GM23248 (cell line): ENCODE measurements at regions of chr12 and their contacts with region 1.

Region 1: DNA sequence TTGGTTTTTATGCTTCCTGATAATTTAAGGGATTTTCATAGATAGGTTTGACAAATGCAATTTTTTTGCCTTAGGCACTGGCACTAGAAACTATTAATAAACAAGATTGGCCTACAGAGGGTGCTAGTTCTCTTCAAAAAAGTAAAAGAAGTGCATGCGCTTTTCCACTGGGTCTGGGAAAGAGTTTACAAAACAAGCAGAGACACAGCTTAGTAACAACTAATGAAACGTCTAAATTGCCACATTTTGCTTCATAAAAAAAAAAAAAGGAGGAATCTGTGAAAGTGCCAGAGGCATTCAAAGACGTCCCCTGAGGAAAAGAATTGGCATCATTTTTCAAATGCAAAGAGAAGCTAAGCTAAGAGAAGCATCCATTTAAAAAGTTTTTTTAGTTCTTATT is 58.3 kb upstream of the EEA1 start:
- DNase-seq: peak; percentile 89
- H3K4me3 ChIP-seq: no peak overlapping the region
- H3K27ac ChIP-seq: no peak overlapping the region
- H3K4me1 ChIP-seq: peaks cover 7% of the 10 kb centered on the region
- H3K27me3 ChIP-seq: no peaks in the 10 kb centered on the region

Region 2: GRCh38 chr12:93347054-93347776 is 359.9 kb after region 1 on chr12:
- in situ Hi-C with region 1: no loop called
- DNase-seq: no peak
- H3K4me3 ChIP-seq: no peak overlapping the region
- H3K27ac ChIP-seq: no peak overlapping the region
- H3K4me1 ChIP-seq: no peaks in the 10 kb centered on the region
- H3K27me3 ChIP-seq: no peaks in the 10 kb centered on the region

Region 3: GRCh38 chr12:93390549-93391297 is 403.4 kb after region 1 on chr12:
- in situ Hi-C with region 1: loop called (anchors 10 kb)
- DNase-seq: no peak
- H3K4me3 ChIP-seq: no peak overlapping the region
- H3K27ac ChIP-seq: no peak overlapping the region
- H3K4me1 ChIP-seq: peaks cover 14% of the 10 kb centered on the region
- H3K27me3 ChIP-seq: no peaks in the 10 kb centered on the region